Activated T-helper 1 cell treated with anti-CD3 and anti-CD28 coated beads, Interleukin-12 subunit alpha, Interleukin-12 subunit beta, Interleukin-2, Interleukin-4 antibody, amounts not matched to agents 30 ng/mL and 10 ng/mL and 1 ng/mL, durations not matched to agents 14 hours and 24 hours and 36 hours (primary cell): ENCODE measurements at regions of chr14 and their contacts with region 1.

Region 1: DNA sequence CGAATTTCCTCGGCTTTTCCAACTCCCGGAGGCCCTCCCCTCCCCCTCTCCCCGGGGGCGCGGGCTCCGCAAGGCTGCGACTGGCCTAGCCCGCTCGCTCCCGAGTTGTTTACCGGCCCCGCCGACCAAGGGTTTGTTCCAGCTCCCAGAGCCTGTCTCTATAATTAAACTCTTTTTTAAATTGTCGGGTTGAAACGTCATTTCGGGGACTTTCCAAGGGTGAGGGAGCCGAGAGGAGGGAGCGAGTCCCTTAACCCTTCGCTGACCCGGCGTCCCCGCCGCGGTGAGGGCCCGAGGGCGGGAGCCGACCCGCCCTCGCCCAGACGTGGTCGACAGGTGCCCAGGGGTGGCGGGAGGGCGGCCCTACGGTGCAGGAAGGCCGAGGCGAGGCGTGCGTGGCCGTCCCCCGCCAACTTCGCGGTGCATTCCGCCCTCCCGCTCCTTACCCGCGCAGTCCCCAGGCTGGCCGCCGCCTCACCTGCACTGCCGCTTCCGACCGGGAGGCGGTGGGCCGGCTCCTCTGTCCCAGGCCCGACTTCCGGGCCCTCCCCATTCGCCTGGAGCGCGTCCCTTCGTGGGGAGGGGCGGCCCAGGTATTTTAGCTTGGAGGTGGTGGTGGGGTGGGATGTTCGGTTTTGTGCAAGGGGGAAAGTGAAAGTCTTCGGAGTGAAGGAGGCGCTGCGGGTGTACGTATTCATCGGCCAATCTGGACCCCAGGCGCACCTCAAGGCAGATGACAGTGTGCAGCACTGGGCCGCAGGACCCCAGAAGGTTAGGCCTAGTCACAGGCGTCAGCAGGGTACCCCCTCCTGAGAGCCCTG is 2.9 kb upstream of the ZFP36L1 start:
- DNase-seq: peak; percentile 80
- H3K4me3 Mint-ChIP-seq: peak overlapping the region; percentile 84
- H3K27ac Mint-ChIP-seq: peak overlapping the region; percentile 95
- H3K4me1 Mint-ChIP-seq: peaks cover 51% of the 10 kb centered on the region
- H3K27me3 Mint-ChIP-seq: no peaks in the 10 kb centered on the region

Region 2: DNA sequence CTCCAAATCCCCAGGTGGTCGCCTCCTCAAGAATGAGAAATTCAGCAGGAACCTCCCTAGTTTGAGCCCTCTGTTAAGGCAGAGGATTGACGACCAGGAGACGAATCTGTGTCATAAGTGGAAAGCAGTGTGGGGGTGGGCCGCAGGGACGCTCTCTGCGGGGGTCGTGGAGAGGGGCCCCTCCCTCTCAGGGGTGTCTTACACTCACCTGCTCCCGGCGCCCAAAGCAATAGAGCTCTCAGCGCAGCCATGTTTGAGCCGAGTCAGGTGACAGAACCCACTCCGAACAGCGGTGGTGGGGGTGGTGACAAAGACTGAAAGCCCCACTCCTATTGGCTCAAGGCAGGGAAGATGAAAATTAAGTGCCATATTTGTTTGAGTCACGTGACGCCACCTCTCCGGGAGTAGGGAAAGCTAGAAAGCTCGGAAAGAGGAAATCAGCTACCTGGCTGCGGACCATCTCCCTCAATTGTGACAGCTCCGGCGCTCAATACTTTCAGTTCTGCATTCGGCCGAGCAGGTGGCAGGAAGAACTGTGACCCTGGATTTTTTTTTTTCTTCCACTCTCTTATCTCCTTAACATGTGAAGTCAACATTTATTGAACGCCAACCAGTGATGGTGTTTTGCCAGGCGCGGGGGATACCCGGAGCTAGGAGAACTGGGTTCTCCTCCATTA is 979.3 kb before region 1 on chr14 and contains the start of gene ZFYVE26:
- intact Hi-C with region 1: loop called (anchors 2 kb)
- DNase-seq: peak; percentile 88
- H3K4me3 Mint-ChIP-seq: peak within 1 kb of the TSS; percentile 90
- H3K27ac Mint-ChIP-seq: peak within 1 kb of the TSS; percentile 90
- H3K4me1 Mint-ChIP-seq: peaks cover 49% of the 10 kb centered on the region
- H3K27me3 Mint-ChIP-seq: no peaks in the 10 kb centered on the region
- total RNA-seq, gene ZFYVE26: 15.2 and 20.0 TPM in 2 replicates

Region 3: DNA sequence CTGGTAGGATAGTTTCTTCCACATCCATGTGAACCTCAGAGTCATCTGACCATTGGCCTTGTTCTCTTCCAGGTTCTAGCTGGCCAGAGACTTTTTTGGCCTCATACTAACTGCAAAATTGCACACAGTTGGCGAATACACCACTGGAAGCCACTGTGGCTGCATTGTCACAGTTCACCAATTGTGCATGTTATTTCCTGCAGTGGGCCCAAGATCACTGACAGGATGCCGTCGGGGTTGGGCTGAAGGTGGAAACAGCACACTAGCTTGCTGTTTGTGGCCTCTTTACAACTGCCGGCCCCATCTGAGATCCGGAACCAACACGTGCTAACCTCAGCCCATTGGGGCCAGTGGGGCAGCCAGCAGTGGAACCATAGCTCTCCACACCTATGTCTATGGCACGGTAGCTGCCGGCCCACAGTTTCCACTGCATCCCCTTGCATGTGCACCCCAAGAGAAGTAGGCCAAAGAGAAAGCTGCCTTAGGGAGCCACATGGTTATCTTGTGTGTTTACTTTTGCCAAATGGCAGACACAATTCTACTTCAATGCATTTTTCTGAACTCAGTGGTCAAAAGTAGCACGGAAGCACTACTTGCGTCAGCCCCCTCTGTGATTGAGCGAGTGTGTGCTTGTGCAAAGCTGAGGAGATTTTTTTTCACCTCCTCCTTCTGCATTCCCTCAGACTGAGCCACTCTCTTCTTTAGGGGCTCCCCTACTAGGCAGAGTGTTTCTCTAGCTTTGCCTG is 512.3 kb before region 1 on chr14:
- intact Hi-C with region 1: loop called (anchors 2 kb)
- DNase-seq: peak; percentile 52
- H3K4me3 Mint-ChIP-seq: peak overlapping the region; percentile 40
- H3K27ac Mint-ChIP-seq: peak overlapping the region; percentile 92
- H3K4me1 Mint-ChIP-seq: peaks cover 57% of the 10 kb centered on the region
- H3K27me3 Mint-ChIP-seq: peaks cover 1% of the 10 kb centered on the region

Region 4: DNA sequence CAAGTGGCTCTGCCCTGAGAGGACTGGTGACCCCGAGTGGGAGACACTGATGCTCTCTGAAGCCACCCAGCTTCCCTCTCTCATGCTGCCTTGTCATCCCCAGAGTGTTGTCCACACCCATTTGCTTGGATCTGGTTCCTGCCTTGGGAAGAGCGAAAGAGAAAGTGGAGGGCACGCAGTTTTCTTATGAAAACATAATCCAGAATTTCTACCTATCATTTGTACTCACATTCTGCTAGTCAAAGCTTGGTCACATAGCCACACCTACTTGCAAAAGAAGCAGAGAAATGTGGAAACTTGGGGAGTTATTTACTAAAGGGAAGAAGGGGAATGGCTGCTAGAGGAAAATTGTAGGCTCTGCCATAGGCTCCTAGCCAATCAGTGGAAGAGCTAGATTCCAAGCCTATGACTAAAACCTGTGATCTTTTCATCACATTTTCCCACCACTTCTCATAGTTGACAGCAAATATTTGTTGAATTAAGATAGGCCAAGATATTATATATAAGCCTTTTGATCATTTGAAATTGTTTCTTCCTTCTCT is 329.2 kb before region 1 on chr14:
- intact Hi-C with region 1: loop called (anchors 1 kb)
- DNase-seq: no peak
- H3K4me3 Mint-ChIP-seq: no peak overlapping the region
- H3K27ac Mint-ChIP-seq: no peak overlapping the region
- H3K4me1 Mint-ChIP-seq: peaks cover 33% of the 10 kb centered on the region
- H3K27me3 Mint-ChIP-seq: no peaks in the 10 kb centered on the region

Region 5: DNA sequence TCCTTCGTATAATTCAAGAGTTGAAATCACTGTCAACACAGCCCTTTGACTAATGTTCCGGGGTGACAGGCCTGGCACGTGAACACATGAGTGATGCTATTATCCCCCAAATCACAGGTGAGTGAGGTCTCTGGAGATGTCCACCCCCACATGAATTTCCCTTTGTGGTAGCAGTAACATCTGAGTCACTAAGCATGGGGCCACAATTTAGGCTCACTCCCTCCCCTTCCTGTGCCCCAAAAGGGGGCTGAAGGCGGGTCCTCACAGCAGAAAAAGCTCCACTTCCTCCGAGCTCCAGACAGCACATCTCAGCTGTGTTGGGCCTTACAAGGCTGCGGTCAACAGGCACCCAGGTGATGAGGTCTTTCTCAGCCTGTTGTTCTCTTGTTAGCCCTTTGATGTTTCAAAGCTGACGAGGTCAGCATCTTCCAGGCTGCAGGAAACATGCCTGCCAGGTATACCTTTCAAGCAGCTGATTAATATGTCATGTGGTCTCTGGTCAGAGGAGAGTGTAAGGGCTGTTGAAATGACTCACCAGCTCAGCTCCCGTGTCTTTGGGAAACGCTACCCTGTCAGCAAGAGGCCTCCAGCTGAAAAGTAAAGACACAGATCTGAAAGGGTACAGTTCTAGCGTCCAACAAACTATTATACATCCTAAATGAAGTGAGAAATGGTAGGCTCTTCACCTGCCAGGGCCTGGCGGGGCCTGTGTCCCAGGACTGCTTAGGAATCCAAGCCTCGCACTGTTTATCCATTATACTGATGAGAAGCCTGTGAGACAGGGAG is 110.2 kb before region 1 on chr14:
- intact Hi-C with region 1: no loop called
- DNase-seq: peak; percentile 71
- H3K4me3 Mint-ChIP-seq: peak overlapping the region; percentile 45
- H3K27ac Mint-ChIP-seq: peak overlapping the region; percentile 86
- H3K4me1 Mint-ChIP-seq: peaks cover 61% of the 10 kb centered on the region
- H3K27me3 Mint-ChIP-seq: peaks cover 2% of the 10 kb centered on the region

Region 6: GRCh38 chr14:68771607-68772006 is 24.2 kb before region 1 on chr14:
- intact Hi-C with region 1: no loop called
- DNase-seq: no peak
- H3K4me3 Mint-ChIP-seq: peak overlapping the region; percentile 50
- H3K27ac Mint-ChIP-seq: peak overlapping the region; percentile 54
- H3K4me1 Mint-ChIP-seq: peaks cover 38% of the 10 kb centered on the region
- H3K27me3 Mint-ChIP-seq: peaks cover 2% of the 10 kb centered on the region

Region 7: DNA sequence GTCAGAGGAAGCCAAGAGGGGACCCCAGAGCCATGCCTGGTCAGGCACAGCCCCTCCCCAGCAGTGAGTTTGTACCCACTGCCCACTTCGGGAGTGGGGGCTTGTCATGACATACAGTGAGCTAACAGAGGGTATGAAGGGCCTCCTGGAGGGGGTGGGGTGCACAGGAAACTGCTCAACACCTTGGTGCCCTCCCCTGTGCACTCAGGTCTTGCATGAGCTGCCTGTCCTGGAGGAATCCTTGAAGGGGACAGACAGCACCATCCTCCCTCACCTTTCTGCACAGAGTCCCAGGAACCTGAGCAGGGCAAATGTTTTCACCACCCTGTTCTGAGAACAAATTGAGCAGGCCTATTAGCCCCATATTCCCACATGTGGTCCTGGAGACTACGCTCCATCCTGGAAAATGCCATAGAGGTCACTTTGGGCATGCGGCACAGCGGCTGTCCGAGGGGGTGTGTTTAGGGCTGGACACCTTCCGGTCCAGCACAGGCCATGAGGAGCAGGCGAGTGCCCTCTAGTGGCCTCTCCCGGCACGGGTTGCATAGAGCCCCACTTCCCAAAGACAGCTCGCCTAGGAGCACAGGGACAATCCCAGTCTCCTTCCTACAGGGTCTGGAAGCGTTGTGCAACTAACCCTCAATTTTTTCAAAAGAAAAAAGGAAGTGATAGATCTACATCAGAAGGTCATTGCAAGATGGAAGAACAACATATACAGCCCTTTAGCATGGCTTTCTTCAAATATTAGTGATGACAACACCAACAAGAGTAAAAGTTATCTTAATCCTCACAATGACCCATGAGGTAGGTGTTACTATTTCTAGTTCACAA is 28.9 kb after region 1 on chr14:
- intact Hi-C with region 1: no loop called
- DNase-seq: no peak
- H3K4me3 Mint-ChIP-seq: no peak overlapping the region
- H3K27ac Mint-ChIP-seq: no peak overlapping the region
- H3K4me1 Mint-ChIP-seq: peaks cover 22% of the 10 kb centered on the region
- H3K27me3 Mint-ChIP-seq: peaks cover 5% of the 10 kb centered on the region

Region 8: GRCh38 chr14:68843471-68844209 is 47.8 kb after region 1 on chr14:
- intact Hi-C with region 1: loop called (anchors 1 kb)
- DNase-seq: peak; percentile 56
- H3K4me3 Mint-ChIP-seq: peak overlapping the region; percentile 13
- H3K27ac Mint-ChIP-seq: no peak overlapping the region
- H3K4me1 Mint-ChIP-seq: peaks cover 24% of the 10 kb centered on the region
- H3K27me3 Mint-ChIP-seq: peaks cover 13% of the 10 kb centered on the region

Region 9: GRCh38 chr14:68862954-68863594 is 67.3 kb after region 1 on chr14:
- intact Hi-C with region 1: no loop called
- DNase-seq: peak; percentile 44
- H3K4me3 Mint-ChIP-seq: no peak overlapping the region
- H3K27ac Mint-ChIP-seq: no peak overlapping the region
- H3K4me1 Mint-ChIP-seq: no peaks in the 10 kb centered on the region
- H3K27me3 Mint-ChIP-seq: peaks cover 3% of the 10 kb centered on the region

Region 10: GRCh38 chr14:69611201-69612011 is 815.6 kb after region 1 on chr14 and contains the start of gene SUSD6:
- intact Hi-C with region 1: loop called (anchors 10 kb)
- DNase-seq: peak; percentile 84
- H3K4me3 Mint-ChIP-seq: peak within 1 kb of the TSS; percentile 98
- H3K27ac Mint-ChIP-seq: peak within 1 kb of the TSS; percentile 93
- H3K4me1 Mint-ChIP-seq: peaks cover 61% of the 10 kb centered on the region
- H3K27me3 Mint-ChIP-seq: no peaks in the 10 kb centered on the region
- total RNA-seq, gene SUSD6: 91.3 and 94.3 TPM in 2 replicates